ENCODE measurements at regions of chr9 and their contacts with region 1.

Region 1: DNA sequence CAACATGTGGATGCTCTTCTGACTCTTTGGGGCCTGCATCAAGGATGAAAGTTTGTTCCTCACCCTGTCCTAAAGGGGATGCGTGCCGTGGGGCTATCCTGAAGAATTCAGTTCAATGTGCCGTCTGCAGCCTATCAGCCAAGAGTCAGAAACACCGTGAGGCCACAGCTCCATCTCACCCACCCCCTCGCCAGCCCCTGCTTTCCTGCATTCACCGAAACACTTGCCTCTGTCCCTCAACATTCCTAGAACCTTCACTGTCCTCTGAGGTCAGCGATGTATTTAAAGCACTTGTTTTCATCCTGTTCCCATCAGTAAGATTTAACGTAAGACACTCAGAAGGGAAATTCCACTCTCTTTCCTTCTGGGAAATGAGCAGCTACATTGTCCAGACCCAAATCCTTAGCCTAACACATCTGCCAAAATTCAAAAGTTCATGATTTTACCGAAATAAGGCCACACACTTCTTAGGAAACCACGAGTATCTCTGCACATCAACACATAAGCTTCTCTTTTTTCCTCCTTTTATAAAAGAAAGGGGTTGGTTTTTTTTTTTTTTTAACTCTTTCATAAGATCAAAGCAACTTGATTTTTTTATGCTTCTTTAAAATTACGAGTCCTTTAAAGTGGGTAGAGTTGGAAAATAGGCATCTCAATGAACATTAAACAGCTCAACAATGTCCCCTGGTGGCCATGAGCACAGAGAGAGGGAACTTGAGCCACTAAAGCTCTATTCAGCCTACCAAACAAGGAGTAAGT is 100.7 kb downstream of the SUSD1 start:
- DNase-seq: peak; percentile 77
- H3K4me3 ChIP-seq: no peak overlapping the region
- H3K27ac ChIP-seq: peak overlapping the region in 1 of 2 donors; percentile 26
- H3K4me1 ChIP-seq: no peaks in the 10 kb centered on the region
- H3K27me3 ChIP-seq: no peaks in the 10 kb centered on the region
- CTCF ChIP-seq: peak; percentile 77 to 92 (median 89)
- POLR2A ChIP-seq: no peak

Region 2: GRCh38 chr9:111759762-111760639 is 314.4 kb before region 1 on chr9:
- intact Hi-C with region 1: loop called (anchors 5 kb)
- DNase-seq: peak; percentile 65
- H3K4me3 ChIP-seq: no peak overlapping the region
- H3K27ac ChIP-seq: peak overlapping the region; percentile 53 to 60
- H3K4me1 ChIP-seq: no peaks in the 10 kb centered on the region
- H3K27me3 ChIP-seq: no peaks in the 10 kb centered on the region
- CTCF ChIP-seq: peak; percentile 50 to 69 (median 62)
- POLR2A ChIP-seq: no peak

Region 3: DNA sequence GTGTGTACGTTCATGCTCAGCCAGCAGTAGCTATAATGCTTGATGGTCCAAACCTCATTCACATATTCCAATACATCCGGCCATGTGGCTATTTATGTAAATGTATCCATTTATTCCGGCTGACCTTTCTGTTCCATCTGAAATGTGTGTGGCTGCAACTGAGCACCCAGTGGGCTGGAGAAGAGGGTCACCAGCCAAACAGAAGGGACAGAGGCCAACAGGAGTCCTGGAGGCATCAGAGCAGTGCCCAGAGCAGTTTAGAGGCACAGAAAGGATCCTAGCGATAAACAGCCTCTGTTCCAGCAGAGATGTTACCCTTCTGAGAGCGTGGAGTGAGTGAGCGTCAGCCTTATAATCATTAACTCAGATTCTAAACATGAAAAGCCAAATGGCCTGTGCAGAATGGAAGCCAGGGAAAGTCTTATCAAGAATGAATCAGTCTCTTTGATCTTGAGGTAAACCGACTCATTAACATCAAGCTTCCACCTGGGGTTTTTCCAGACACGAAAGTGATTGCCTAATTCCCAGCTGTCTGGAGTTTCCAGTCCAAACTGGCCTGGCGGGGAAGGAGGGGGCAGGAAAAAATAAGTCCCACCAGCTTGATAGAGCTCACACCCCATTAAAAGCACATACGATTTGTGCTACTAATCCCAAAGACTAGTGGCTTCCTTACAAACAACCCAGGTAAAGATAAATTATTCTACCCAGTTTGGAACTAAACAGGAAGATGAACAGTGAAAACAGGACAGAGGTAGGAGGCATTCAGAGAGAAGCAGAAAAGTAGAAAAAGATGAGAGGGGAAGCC is 45.0 kb after region 1 on chr9:
- intact Hi-C with region 1: no loop called
- DNase-seq: no peak
- H3K4me3 ChIP-seq: no peak overlapping the region
- H3K27ac ChIP-seq: no peak overlapping the region
- H3K4me1 ChIP-seq: no peaks in the 10 kb centered on the region
- H3K27me3 ChIP-seq: no peaks in the 10 kb centered on the region
- CTCF ChIP-seq: no peak
- POLR2A ChIP-seq: no peak